Upper lobe of right lung (tissue), 1 donor: ENCODE measurements at regions of chr2 and their contacts with region 1.

Region 1: GRCh38 chr2:230184727-230185578 is 34.8 kb downstream of the SP110 start:
- DNase-seq: no peak
- ATAC-seq: peak; percentile 22
- H3K4me3 ChIP-seq: no peak overlapping the region
- H3K27ac ChIP-seq: no peak overlapping the region
- H3K4me1 ChIP-seq: no peaks in the 10 kb centered on the region
- H3K27me3 ChIP-seq: no peaks in the 10 kb centered on the region
- CTCF ChIP-seq: no peak

Region 2: GRCh38 chr2:230684270-230685168 is 499.6 kb after region 1 on chr2:
- intact Hi-C with region 1: loop called (anchors 5 kb)
- DNase-seq: no peak
- ATAC-seq: no peak
- H3K4me3 ChIP-seq: no peak overlapping the region
- H3K27ac ChIP-seq: no peak overlapping the region
- H3K4me1 ChIP-seq: no peaks in the 10 kb centered on the region
- H3K27me3 ChIP-seq: no peaks in the 10 kb centered on the region
- CTCF ChIP-seq: no peak